ENCODE measurements at regions of chr12 and their contacts with region 1.

Region 1: GRCh38 chr12:105420659-105421240 is 90.3 kb downstream of the C12orf75 start:
- DNase-seq: peak; percentile 45
- ATAC-seq: peak; percentile 78
- H3K4me3 ChIP-seq: no peak overlapping the region
- H3K27ac ChIP-seq: no peak overlapping the region
- H3K4me1 ChIP-seq: peaks cover 0 to 13% of the 10 kb centered on the region in 2 experiments; a peak in 1 of 4 replicates
- H3K27me3 ChIP-seq: no peaks in the 10 kb centered on the region
- CTCF ChIP-seq: peak; percentile 81 to 89 (median 83)
- POLR2A ChIP-seq: no peak
- RAD21 ChIP-seq: peak; percentile 99

Region 2: DNA sequence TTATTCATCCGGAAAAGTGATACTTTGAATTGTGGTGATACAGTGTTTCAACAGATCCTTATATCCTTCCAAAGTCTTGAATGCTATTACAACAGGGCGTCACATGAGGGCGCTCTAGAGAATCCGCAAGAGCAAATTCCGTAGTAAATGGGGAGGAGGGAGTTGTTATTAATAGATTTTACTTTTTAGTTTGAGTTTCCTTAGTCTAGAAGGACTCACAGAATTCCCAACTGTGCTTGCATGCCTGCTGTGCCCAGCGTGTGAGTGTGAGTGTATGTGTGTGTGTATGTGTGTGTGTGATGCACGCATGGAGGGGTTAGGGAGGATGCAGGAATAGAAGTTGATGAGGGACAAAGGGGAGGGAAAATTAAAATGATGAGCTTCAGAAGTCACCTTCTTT is 285.0 kb after region 1 on chr12:
- CTCF ChIA-PET with region 1: interaction called, 3 read pairs
- POLR2A ChIA-PET with region 1: no interaction called
- RAD21 ChIA-PET with region 1: interaction called in 1 of 2 experiments, 3 read pairs
- intact Hi-C with region 1: loop called (anchors 10 kb)
- DNase-seq: peak; percentile 33
- ATAC-seq: peak; percentile 78
- H3K4me3 ChIP-seq: no peak overlapping the region
- H3K27ac ChIP-seq: no peak overlapping the region
- H3K4me1 ChIP-seq: peaks cover 0 to 7% of the 10 kb centered on the region in 2 experiments; a peak in 2 of 4 replicates
- H3K27me3 ChIP-seq: no peaks in the 10 kb centered on the region
- CTCF ChIP-seq: peak; percentile 66 to 90 (median 80)
- POLR2A ChIP-seq: no peak
- RAD21 ChIP-seq: peak; percentile 66

Region 3: DNA sequence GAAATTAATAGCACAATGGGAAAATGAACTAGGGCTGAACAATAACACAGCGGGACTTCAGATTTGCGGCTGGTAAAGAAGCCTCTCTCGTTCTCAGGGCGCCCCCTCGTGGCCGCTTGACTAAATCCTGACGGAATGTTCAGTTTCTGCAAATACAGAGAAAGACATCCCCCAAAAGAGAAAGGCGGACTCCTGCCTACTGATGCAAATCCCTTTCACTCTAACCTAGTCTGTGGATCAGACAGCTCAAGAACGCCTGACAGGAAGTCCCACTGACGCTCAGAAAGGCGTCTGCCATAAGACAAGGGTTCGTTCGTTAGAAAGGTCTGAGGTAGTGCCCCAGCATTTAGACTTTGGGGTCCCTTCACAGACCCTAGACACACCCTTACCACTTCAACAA is 715.5 kb after region 1 on chr12:
- CTCF ChIA-PET with region 1: interaction called, 36 read pairs
- POLR2A ChIA-PET with region 1: no interaction called
- RAD21 ChIA-PET with region 1: interaction called in 1 of 2 experiments, 3 read pairs
- intact Hi-C with region 1: loop called (anchors 1 kb)
- DNase-seq: peak; percentile 37
- ATAC-seq: no peak
- H3K4me3 ChIP-seq: no peak overlapping the region
- H3K27ac ChIP-seq: no peak overlapping the region
- H3K4me1 ChIP-seq: peaks cover 28 to 40% of the 10 kb centered on the region in 2 experiments
- H3K27me3 ChIP-seq: no peaks in the 10 kb centered on the region
- CTCF ChIP-seq: peak; percentile 69 to 89 (median 83)
- POLR2A ChIP-seq: no peak
- RAD21 ChIP-seq: peak; percentile 95

Region 4: GRCh38 chr12:106149096-106149784 is 728.5 kb after region 1 on chr12:
- CTCF ChIA-PET with region 1: interaction called, 25 read pairs
- POLR2A ChIA-PET with region 1: no interaction called
- RAD21 ChIA-PET with region 1: interaction called, 3 read pairs
- intact Hi-C with region 1: no loop called
- DNase-seq: peak; percentile 33
- ATAC-seq: peak; percentile 88
- H3K4me3 ChIP-seq: no peak overlapping the region
- H3K27ac ChIP-seq: no peak overlapping the region
- H3K4me1 ChIP-seq: peaks cover 8 to 12% of the 10 kb centered on the region in 2 experiments; a peak in 3 of 4 replicates
- H3K27me3 ChIP-seq: no peaks in the 10 kb centered on the region
- CTCF ChIP-seq: peak; percentile 56 to 73 (median 71); a peak in 5 of 6 replicates
- POLR2A ChIP-seq: no peak
- RAD21 ChIP-seq: peak; percentile 61

Region 5: GRCh38 chr12:106205208-106206071 is 784.7 kb after region 1 on chr12:
- CTCF ChIA-PET with region 1: interaction called, 5 read pairs
- POLR2A ChIA-PET with region 1: no interaction called
- RAD21 ChIA-PET with region 1: no interaction called
- intact Hi-C with region 1: loop called (anchors 1 kb)
- DNase-seq: peak; percentile 64
- ATAC-seq: peak; percentile 100
- H3K4me3 ChIP-seq: no peak overlapping the region
- H3K27ac ChIP-seq: no peak overlapping the region
- H3K4me1 ChIP-seq: no peaks in the 10 kb centered on the region; a peak in 1 of 4 replicates
- H3K27me3 ChIP-seq: peaks cover 5% of the 10 kb centered on the region; the same call in 1 of the 2 replicates
- CTCF ChIP-seq: peak; percentile 61 to 93 (median 69)
- POLR2A ChIP-seq: no peak
- RAD21 ChIP-seq: peak; percentile 83

Region 6: DNA sequence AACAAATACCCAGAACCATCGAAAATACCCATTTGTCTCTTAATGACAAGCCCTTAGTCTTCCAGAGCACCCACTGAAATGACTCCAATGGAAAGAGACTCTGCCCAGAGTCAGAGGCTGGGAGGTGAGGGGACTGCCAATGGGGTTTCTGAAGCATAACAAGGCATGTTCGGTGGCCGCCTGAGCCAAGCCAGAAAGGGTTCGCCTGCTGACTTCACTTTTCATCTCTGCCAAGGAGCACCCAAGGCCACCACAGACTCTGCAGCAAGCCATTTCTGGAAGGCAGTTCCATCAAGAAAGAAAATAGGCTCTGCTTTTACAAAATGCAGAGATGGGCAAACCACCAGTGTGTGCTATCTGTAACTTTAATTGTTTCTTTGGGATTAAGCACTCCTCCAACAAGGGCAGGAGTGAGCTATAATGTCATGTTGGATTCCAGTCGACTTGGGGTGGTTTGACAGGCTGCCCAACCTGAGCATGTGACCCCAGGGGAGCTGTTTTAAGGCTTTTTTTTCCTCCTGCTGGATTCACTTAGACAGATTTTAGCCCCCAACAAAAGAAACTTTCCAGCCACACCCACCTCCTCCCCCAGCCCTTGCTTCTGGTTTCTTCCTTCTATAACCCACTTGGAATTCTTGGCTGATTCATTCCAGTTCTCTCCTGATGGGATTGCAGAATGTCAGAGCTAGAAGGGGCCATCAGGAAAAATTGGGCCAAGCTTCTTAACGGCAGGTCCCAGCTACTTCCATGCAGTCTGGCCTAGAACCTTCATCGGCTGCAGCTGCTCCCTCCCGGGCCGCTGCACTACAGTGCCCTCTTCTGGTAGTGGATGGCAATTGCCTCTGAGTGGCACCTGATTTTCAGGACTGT is 803.0 kb after region 1 on chr12:
- CTCF ChIA-PET with region 1: interaction called, 15 read pairs
- POLR2A ChIA-PET with region 1: no interaction called
- RAD21 ChIA-PET with region 1: interaction called in 1 of 2 experiments, 6 read pairs
- intact Hi-C with region 1: loop called (anchors 1 kb)
- DNase-seq: peak; percentile 36
- ATAC-seq: peak; percentile 95
- H3K4me3 ChIP-seq: no peak overlapping the region
- H3K27ac ChIP-seq: no peak overlapping the region
- H3K4me1 ChIP-seq: no peaks in the 10 kb centered on the region
- H3K27me3 ChIP-seq: no peaks in the 10 kb centered on the region
- CTCF ChIP-seq: peak; percentile 78 to 95 (median 87)
- POLR2A ChIP-seq: no peak
- RAD21 ChIP-seq: peak; percentile 89

Region 7: GRCh38 chr12:106919910-106920544 is 1499.3 kb after region 1 on chr12:
- CTCF ChIA-PET with region 1: no interaction called
- POLR2A ChIA-PET with region 1: no interaction called
- RAD21 ChIA-PET with region 1: no interaction called
- intact Hi-C with region 1: loop called (anchors 10 kb)
- DNase-seq: peak; percentile 34
- ATAC-seq: peak; percentile 66
- H3K4me3 ChIP-seq: no peak overlapping the region
- H3K27ac ChIP-seq: no peak overlapping the region
- H3K4me1 ChIP-seq: no peaks in the 10 kb centered on the region
- H3K27me3 ChIP-seq: no peaks in the 10 kb centered on the region
- CTCF ChIP-seq: peak; percentile 65 to 85 (median 70); a peak in 5 of 6 replicates
- POLR2A ChIP-seq: no peak
- RAD21 ChIP-seq: peak; percentile 83